Thyroid gland (tissue), 4 donors: ENCODE measurements at regions of chr4 and their contacts with region 1.

Region 1: GRCh38 chr4:38856524-38857337 is at the start of gene TLR6:
- DNase-seq: peak; percentile 52 to 53
- H3K4me3 ChIP-seq: peak within 1 kb of the TSS in 1 of 3 donors; percentile 8
- H3K27ac ChIP-seq: peak within 1 kb of the TSS in 2 of 3 donors; percentile 5 to 50
- H3K4me1 ChIP-seq: peaks cover 0 to 12% of the 10 kb centered on the region in 2 donors
- H3K27me3 ChIP-seq: no peaks in the 10 kb centered on the region
- CTCF ChIP-seq: peak; percentile 54 to 83 (median 67)
- POLR2A ChIP-seq: no peak
- total RNA-seq, gene TLR6: 1.4 to 3.0 (median 1.8) TPM

Region 2: DNA sequence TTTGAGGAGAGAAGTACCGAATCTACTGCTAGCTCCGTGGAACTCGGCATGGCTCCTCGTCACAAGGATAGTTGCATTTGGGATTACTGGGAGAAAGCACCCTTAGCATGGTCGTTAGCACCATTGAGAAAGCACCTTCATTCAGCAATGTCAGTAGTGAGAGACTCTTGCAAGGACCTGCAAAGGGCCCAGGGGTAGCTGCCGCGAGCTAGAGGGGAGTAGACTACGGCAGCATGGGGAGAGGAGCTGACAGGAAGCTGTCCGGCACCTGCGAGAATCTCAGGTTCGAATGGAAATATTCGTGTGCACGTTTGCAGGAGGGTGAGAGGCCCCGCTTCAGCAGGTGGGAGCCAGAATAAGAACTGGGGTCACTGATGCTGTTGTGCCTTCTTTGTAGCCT is 94.2 kb before region 1 on chr4:
- intact Hi-C with region 1: loop called (anchors 5 kb)
- DNase-seq: no peak
- H3K4me3 ChIP-seq: no peak overlapping the region
- H3K27ac ChIP-seq: no peak overlapping the region
- H3K4me1 ChIP-seq: no peaks in the 10 kb centered on the region
- H3K27me3 ChIP-seq: no peaks in the 10 kb centered on the region
- CTCF ChIP-seq: no peak
- POLR2A ChIP-seq: no peak

Region 3: GRCh38 chr4:38939165-38939564 is 82.4 kb after region 1 on chr4:
- intact Hi-C with region 1: no loop called
- DNase-seq: no peak
- H3K4me3 ChIP-seq: no peak overlapping the region
- H3K27ac ChIP-seq: no peak overlapping the region
- H3K4me1 ChIP-seq: no peaks in the 10 kb centered on the region
- H3K27me3 ChIP-seq: no peaks in the 10 kb centered on the region
- CTCF ChIP-seq: no peak
- POLR2A ChIP-seq: no peak

Region 4: DNA sequence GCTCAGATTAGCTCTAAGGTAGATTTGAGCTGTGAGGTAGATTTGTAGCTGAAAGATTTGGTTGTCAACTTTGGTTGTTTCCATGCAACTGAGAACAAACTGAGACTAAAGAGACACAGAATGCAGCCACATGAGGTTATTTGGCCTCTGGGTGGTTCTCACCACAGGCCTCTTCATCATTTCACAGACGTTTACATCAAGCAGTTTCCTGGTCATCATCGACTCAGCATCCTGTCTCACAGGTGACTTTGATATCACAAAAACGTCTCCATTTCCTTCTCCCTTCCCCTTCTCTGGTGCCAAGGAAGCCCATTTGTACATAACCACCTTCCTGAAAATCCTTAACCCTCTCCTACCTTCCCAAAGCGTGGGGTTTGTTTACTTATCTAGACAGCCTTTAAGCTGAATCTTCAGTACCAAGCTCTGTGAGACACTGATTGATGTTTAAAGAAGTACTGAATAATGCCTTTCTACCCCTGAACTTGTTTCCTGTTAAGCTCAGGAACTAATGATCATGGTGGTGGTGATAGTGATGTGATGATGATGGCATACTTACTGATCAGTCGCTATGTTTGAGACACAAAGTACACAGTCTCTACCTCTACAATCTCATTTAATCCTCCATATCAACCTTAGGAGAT is 92.8 kb after region 1 on chr4:
- intact Hi-C with region 1: no loop called
- DNase-seq: no peak
- H3K4me3 ChIP-seq: no peak overlapping the region
- H3K27ac ChIP-seq: no peak overlapping the region
- H3K4me1 ChIP-seq: no peaks in the 10 kb centered on the region
- H3K27me3 ChIP-seq: no peaks in the 10 kb centered on the region
- CTCF ChIP-seq: no peak
- POLR2A ChIP-seq: no peak